ENCODE measurements at regions of chr11 and their contacts with region 1.

Region 1: GRCh38 chr11:1572197-1573076 is at the start of gene DUSP8:
- DNase-seq: no peak
- H3K4me3 ChIP-seq: peak within 1 kb of the TSS; percentile 63
- CTCF ChIP-seq: no peak

Region 2: GRCh38 chr11:1202776-1203504 is 369.5 kb before region 1 on chr11:
- CTCF ChIA-PET with region 1: interaction called, 25 read pairs
- POLR2A ChIA-PET with region 1: no interaction called
- DNase-seq: no peak
- H3K4me3 ChIP-seq: no peak overlapping the region
- CTCF ChIP-seq: peak; percentile 91

Region 3: DNA sequence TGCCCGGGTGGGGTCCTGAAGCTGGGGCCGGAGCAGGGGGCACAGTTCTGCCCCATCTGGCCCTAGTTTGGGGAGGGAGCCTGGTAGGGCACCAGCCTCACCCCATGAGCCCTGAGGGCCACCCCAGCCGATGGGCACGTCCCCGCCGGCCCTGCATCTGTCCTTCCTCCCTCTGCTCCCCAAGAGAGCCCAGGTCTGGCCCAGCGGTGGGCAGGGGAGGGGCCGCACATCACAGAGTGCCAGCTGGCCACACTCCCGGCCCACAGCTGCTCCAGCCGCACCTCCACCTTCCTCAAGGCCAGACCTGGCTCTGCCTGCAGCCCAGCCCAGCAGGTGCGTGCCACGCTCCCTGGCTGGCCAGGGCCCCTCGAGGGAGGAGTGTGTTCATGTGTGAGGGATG is 161.1 kb before region 1 on chr11:
- CTCF ChIA-PET with region 1: no interaction called
- POLR2A ChIA-PET with region 1: no interaction called
- DNase-seq: no peak
- H3K4me3 ChIP-seq: no peak overlapping the region
- CTCF ChIP-seq: no peak

Region 4: DNA sequence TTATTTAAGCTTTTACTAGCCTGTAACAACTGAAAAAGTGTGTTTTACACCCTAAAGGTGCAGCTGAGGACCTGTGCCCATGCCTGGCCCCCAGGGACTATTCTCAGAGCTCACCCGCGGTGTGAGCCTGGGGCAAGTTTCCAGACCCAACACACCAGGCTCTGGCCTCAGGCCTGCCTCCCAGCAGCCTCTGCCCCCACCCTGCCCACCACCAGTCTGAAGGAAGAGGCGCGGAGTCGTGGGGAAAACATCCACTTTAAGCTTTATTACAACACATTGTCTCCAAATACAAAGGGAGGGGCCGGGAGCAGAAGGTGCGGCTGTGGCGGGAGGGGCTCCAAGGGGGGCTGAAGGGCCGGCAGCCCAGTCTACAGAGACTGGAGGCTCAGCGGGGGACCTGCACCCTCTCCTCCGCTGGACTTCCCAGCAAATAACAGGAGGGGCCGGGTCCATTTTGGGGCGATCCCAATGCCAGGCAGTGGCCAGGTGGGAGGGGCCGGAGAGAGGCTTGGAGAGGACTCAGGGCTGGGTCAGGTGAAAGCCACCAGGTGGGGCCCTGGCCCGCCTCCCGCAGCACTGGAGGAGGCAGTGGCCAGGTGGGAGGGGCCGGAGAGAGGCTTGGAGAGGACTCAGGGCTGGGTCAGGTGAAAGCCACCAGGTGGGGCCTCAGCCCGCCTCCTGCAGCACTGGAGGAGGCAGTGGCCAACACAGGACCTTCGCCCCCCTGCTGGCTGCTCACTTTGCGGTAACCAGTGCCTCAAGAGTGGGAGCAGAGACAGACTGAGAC is 18.4 kb before region 1 on chr11:
- CTCF ChIA-PET with region 1: interaction called, 266 read pairs
- POLR2A ChIA-PET with region 1: no interaction called
- DNase-seq: no peak
- H3K4me3 ChIP-seq: no peak overlapping the region
- CTCF ChIP-seq: no peak

Region 5: DNA sequence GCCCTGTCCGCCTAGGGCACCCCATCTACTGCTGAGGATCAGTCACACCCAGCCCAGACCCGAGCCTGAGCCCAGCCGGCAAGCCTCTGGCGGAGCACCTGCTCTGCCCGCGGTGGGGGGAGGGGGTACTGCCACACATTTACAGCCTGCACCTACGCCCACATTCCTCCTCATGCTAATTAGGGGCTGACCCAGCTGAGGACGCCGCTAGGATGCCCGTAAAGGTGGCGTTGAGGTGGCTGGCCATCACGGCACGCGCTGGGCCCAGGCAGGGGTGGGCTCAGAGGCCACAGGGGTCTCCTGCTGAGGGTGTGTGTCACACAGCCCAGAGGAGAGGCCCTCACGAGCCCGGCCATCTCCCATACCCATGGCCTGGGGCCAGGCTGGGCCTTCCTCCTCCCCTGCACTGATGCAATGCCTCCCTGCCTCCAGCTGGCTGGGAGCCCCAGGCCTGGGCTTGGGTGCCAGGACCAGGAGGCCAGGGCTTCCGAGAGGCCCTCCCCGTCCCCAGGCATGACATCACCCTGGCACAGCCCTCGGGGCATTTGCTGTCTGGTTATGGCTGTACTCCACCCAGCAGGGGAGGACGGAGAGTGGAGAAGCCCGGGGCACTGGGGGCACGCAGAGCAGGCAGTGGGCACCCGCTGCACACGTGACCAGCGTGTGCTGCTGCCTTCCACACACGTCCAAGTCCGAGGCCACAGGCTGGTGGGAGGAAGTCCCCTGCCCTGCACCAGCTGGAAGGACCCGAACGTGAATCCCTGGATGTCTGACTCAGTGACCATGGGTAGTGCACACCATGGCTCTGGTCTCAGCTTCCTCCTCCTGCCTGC is 13.1 kb before region 1 on chr11:
- CTCF ChIA-PET with region 1: interaction called, 52 read pairs
- POLR2A ChIA-PET with region 1: interaction called, 3 read pairs
- DNase-seq: peak; percentile 34
- H3K4me3 ChIP-seq: no peak overlapping the region
- CTCF ChIP-seq: no peak

Measured in AG04449 (cell line).